A549 (cell line): ENCODE measurements at regions of chr20 and their contacts with region 1.

Region 1: GRCh38 chr20:47453142-47453782 is 48.4 kb upstream of the NCOA3 start:
- DNase-seq: peak; percentile 50 to 93
- ATAC-seq: peak; percentile 85 to 90
- H3K4me3 ChIP-seq: no peak overlapping the region
- H3K27ac ChIP-seq: peak overlapping the region; percentile 87 to 90
- H3K4me1 ChIP-seq: peaks cover 68% of the 10 kb centered on the region
- CTCF ChIP-seq: no peak
- EP300 ChIP-seq: peak; percentile 78 to 82; a peak in 4 of 5 replicates
- POLR2A ChIP-seq: no peak
- RAD21 ChIP-seq: peak; percentile 38 to 39; a peak in 3 of 5 replicates

Region 2: DNA sequence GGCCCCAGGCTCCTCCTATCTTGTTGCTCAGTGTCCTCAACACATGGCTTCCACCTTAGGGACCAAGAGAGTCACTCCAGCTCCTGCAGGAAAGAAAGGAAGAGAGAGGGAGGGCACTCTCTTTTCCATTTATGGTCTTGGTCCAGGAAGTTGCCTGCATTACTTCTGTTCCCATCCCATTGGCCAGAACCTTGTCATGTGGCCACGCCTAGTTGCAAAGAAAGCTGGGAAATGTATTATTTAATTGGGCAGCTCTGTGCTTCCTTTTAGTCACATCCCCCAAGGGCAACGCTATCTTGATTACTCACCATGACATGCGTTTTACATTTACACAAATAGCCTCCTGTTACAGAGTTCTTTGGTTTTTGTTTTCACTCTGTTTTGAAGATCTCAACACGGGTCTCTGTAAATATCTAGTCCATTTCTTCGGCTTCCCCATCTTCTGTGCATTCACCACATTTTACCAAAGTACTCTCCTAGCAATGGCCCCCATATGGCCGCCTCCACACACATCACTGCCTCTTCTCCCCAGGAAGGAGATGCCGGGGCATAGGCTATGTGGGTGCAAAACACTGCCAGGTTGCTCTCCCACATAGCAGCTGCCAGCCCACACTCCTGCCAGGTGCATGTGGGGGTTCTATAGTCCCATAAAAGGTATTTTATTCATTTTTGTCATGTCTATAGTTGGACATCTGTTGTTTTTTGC is 61.1 kb before region 1 on chr20:
- CTCF ChIA-PET with region 1: no interaction called
- POLR2A ChIA-PET with region 1: interaction called, 11 read pairs
- DNase-seq: peak; percentile 83 to 99
- ATAC-seq: peak; percentile 81 to 85
- H3K4me3 ChIP-seq: no peak overlapping the region
- H3K27ac ChIP-seq: peak overlapping the region; percentile 90 to 92
- H3K4me1 ChIP-seq: peaks cover 40% of the 10 kb centered on the region
- CTCF ChIP-seq: no peak
- EP300 ChIP-seq: no peak
- POLR2A ChIP-seq: no peak
- RAD21 ChIP-seq: peak in 1 of 2 experiments; percentile 28; a peak in 2 of 5 replicates

Region 3: DNA sequence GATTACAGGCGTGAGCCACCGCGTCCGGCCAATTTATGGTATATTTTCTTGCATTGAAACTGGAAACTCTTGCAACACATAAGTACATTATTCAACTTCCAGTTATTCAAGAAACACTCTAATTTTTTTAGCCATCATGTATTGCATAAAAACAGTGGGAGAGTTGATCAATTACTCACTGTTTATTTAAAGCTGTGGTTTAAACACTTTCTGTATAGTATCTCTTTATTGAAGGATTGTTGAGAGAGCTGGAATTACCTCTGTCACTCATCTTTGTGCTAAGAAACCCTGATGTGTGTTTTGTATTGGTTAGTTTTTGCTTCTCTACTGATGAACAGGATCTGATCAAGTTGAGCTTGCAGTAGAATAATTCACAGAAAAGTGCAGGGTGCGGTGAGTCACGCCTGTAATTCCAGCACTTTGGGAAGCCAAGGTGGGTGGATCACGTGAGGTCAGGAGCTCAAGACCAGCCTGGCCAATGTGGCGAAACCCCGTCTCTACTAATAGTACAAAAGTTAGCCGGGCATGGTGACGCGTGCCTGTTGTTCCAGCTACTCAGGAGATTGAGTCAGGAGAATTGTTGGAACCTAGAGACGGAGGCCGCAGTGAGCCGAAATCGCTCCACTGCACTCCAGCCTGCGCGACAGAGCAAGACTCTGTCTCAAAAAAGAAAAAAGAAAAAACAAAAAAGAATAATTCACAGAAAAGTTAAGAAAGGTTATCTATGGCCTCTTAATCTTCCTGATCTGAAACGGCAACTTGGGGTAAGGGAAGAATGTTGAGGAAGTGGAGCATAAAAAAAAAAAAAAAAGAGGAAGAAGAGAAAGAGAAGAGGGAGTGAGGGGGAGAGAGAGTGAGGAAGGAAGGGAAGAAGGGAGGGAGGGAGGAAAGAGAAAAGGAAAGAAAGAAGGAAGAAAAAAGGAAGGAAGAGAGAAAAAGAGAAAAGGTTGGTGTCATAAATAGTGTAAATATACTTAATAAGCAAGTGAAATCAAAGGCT is 20.8 kb before region 1 on chr20:
- CTCF ChIA-PET with region 1: interaction called, 6 read pairs
- POLR2A ChIA-PET with region 1: interaction called, 12 read pairs
- DNase-seq: peak in 1 of 2 experiments; percentile 87
- ATAC-seq: peak; percentile 83 to 84
- H3K4me3 ChIP-seq: peak overlapping the region; percentile 18; the same call in 2 of the 3 replicates
- H3K27ac ChIP-seq: peak overlapping the region; percentile 75 to 82
- H3K4me1 ChIP-seq: peaks cover 31% of the 10 kb centered on the region
- CTCF ChIP-seq: no peak
- EP300 ChIP-seq: no peak
- POLR2A ChIP-seq: no peak
- RAD21 ChIP-seq: 0 out of 5 replicates have a peak, but pooled peaks have one; percentile 10 to 21

Region 4: GRCh38 chr20:47464380-47465101 is 11.3 kb after region 1 on chr20:
- CTCF ChIA-PET with region 1: interaction called, 19 read pairs
- POLR2A ChIA-PET with region 1: interaction called, 3 read pairs
- DNase-seq: peak; percentile 97 to 99
- ATAC-seq: peak; percentile 97 to 98
- H3K4me3 ChIP-seq: no peak overlapping the region
- H3K27ac ChIP-seq: peak overlapping the region; percentile 88 to 95
- H3K4me1 ChIP-seq: peaks cover 46% of the 10 kb centered on the region
- CTCF ChIP-seq: no peak; the same call in 1 of the 3 replicates
- EP300 ChIP-seq: peak; percentile 93 to 96
- POLR2A ChIP-seq: no peak
- RAD21 ChIP-seq: peak; percentile 71 to 83

Region 5: DNA sequence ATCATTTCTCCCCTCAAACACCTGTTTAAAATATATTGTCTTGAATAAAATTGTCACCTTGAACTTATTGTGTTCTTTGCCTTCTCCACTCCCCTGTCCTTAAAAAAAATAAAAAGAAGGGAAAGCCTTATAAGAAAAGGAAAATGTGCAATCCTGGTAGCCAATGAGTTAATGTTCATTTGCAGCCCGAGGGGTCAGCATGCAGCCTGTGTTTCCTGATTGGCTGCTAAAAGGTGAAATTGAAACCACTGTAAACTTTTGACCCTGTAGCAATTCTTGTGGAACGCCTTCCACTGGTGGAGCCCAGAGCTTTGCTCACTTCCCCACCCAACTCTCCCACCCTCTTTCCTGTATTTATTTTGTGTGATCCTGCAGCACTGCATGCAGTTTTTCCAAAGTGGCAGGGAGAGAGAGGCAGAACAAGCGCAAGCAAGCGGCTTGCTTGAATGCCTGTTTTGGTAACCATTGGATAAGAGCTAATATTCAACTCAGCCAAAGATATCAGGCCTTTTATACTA is 123.3 kb after region 1 on chr20:
- CTCF ChIA-PET with region 1: no interaction called
- POLR2A ChIA-PET with region 1: no interaction called
- DNase-seq: peak; percentile 81 to 92
- ATAC-seq: peak; percentile 89 to 90
- H3K4me3 ChIP-seq: peak overlapping the region; percentile 25; the same call in 2 of the 3 replicates
- H3K27ac ChIP-seq: peak overlapping the region; percentile 69 to 85
- H3K4me1 ChIP-seq: peaks cover 79% of the 10 kb centered on the region
- CTCF ChIP-seq: no peak
- EP300 ChIP-seq: no peak
- POLR2A ChIP-seq: peak; percentile 33; the same call in 1 of the 2 replicates
- RAD21 ChIP-seq: 0 out of 5 replicates have a peak, but pooled peaks of 1 of the 2 experiments have one; percentile 37